ENCODE measurements at regions of chr1 and their contacts with region 1.

Region 1: GRCh38 chr1:48677306-48678287 is 99.1 kb downstream of the BEND5 start:
- DNase-seq: peak; percentile 81 to 86
- H3K4me3 ChIP-seq: no peak overlapping the region
- H3K27ac ChIP-seq: no peak overlapping the region
- H3K4me1 ChIP-seq: peaks cover 0 to 20% (median 14%) of the 10 kb centered on the region in 4 donors
- H3K27me3 ChIP-seq: peaks cover 0 to 7% (median 0%) of the 10 kb centered on the region in 3 donors
- CTCF ChIP-seq: peak in 5 of 7 experiments; percentile 24 to 69 (median 62)
- EP300 ChIP-seq: no peak
- POLR2A ChIP-seq: no peak

Region 2: GRCh38 chr1:48817505-48818114 is 140.0 kb after region 1 on chr1:
- intact Hi-C with region 1: loop called (anchors 10 kb)
- DNase-seq: peak; percentile 71 to 86
- H3K4me3 ChIP-seq: no peak overlapping the region
- H3K27ac ChIP-seq: no peak overlapping the region
- H3K4me1 ChIP-seq: no peaks in the 10 kb centered on the region
- H3K27me3 ChIP-seq: no peaks in the 10 kb centered on the region
- CTCF ChIP-seq: peak in 4 of 7 experiments; percentile 61 to 71 (median 65)
- EP300 ChIP-seq: no peak
- POLR2A ChIP-seq: no peak